ENCODE measurements at regions of chr4 and their contacts with region 1.

Region 1: GRCh38 chr4:26860157-26860921 is at the start of gene STIM2:
- DNase-seq: peak; percentile 100
- H3K4me3 Mint-ChIP-seq: peak within 1 kb of the TSS; percentile 96
- H3K27ac Mint-ChIP-seq: peak within 1 kb of the TSS; percentile 98
- H3K4me1 Mint-ChIP-seq: peaks cover 54% of the 10 kb centered on the region
- H3K27me3 Mint-ChIP-seq: no peaks in the 10 kb centered on the region
- total RNA-seq, gene STIM2: 43.2 and 46.0 TPM in 2 replicates

Region 2: GRCh38 chr4:26319467-26319948 is 540.8 kb before region 1 on chr4:
- intact Hi-C with region 1: loop called (anchors 5 kb)
- DNase-seq: peak; percentile 99
- H3K4me3 Mint-ChIP-seq: peak overlapping the region; percentile 97
- H3K27ac Mint-ChIP-seq: peak overlapping the region; percentile 99
- H3K4me1 Mint-ChIP-seq: peaks cover 41% of the 10 kb centered on the region
- H3K27me3 Mint-ChIP-seq: peaks cover 3% of the 10 kb centered on the region

Region 3: GRCh38 chr4:26731351-26732035 is 128.8 kb before region 1 on chr4:
- intact Hi-C with region 1: loop called (anchors 2 kb)
- DNase-seq: no peak
- H3K4me3 Mint-ChIP-seq: no peak overlapping the region
- H3K27ac Mint-ChIP-seq: no peak overlapping the region
- H3K4me1 Mint-ChIP-seq: peaks cover 10% of the 10 kb centered on the region
- H3K27me3 Mint-ChIP-seq: peaks cover 2% of the 10 kb centered on the region

Region 4: DNA sequence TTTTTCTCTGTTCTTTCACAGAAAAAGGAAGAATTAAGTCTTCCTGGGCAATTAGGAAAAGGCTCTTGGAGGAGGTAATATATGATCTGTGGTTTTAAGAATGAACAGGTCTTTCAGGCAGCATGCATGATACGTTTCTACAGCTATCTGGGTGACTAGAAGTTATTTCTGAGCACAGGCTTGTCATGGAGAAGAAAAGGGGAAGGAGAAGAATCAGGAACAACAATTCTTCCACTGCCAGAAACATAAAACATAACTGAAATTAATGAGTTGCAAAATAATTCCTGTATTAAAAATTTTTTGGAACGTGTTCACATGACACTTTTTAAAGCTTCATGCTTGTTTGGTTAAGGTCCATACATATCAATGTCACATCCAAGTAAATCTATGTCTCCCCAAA is 17.4 kb before region 1 on chr4:
- intact Hi-C with region 1: no loop called
- DNase-seq: no peak
- H3K4me3 Mint-ChIP-seq: no peak overlapping the region
- H3K27ac Mint-ChIP-seq: no peak overlapping the region
- H3K4me1 Mint-ChIP-seq: peaks cover 4% of the 10 kb centered on the region
- H3K27me3 Mint-ChIP-seq: peaks cover 19% of the 10 kb centered on the region

Region 5: GRCh38 chr4:26873391-26874026 is 13.2 kb after region 1 on chr4:
- intact Hi-C with region 1: loop called (anchors 1 kb)
- DNase-seq: peak; percentile 86
- H3K4me3 Mint-ChIP-seq: peak overlapping the region; percentile 46
- H3K27ac Mint-ChIP-seq: peak overlapping the region; percentile 79
- H3K4me1 Mint-ChIP-seq: peaks cover 59% of the 10 kb centered on the region
- H3K27me3 Mint-ChIP-seq: no peaks in the 10 kb centered on the region

Region 6: DNA sequence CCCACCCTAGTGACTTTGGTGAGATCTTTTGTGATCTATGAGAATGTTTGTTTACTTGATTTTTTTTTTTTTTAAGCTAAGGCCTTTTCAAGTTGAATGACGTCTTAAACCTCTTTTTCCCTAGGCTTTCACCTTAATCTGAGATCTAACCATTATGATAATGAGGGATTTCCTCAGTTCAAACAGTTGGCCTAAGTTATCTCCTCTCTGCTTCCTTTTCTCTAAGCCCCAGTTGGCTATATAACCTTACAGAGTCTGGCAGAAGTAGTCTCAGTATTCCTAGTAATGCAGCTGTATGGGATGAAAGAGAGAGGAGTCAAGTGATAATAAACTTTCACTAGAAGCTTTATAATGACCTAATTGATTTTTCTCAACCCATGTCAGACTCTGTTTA is 99.3 kb after region 1 on chr4:
- intact Hi-C with region 1: loop called (anchors 5 kb)
- DNase-seq: no peak
- H3K4me3 Mint-ChIP-seq: peak overlapping the region; percentile 20
- H3K27ac Mint-ChIP-seq: peak overlapping the region; percentile 71
- H3K4me1 Mint-ChIP-seq: peaks cover 33% of the 10 kb centered on the region
- H3K27me3 Mint-ChIP-seq: no peaks in the 10 kb centered on the region

Region 7: GRCh38 chr4:27666943-27667342 is 806.6 kb after region 1 on chr4:
- intact Hi-C with region 1: no loop called
- DNase-seq: no peak
- H3K4me3 Mint-ChIP-seq: no peak overlapping the region
- H3K27ac Mint-ChIP-seq: no peak overlapping the region
- H3K4me1 Mint-ChIP-seq: no peaks in the 10 kb centered on the region
- H3K27me3 Mint-ChIP-seq: no peaks in the 10 kb centered on the region